Dorsolateral prefrontal cortex (tissue), 120 donors: ENCODE measurements at regions of chr19 and their contacts with region 1.

Region 1: GRCh38 chr19:7152568-7152967 is 83.1 kb downstream of the ZNF557 start:
- DNase-seq: no peak
- H3K4me3 ChIP-seq: no peak overlapping the region
- H3K27ac ChIP-seq: no peak overlapping the region
- H3K27me3 ChIP-seq: no peaks in the 10 kb centered on the region
- CTCF ChIP-seq: no peak

Region 2: GRCh38 chr19:7197760-7198696 is 45.5 kb after region 1 on chr19:
- intact Hi-C with region 1: loop called in 1 of 2 experiments (anchors 5 kb)
- DNase-seq: peak; percentile 78 to 94 (median 90)
- H3K4me3 ChIP-seq: peak overlapping the region; percentile 48 to 100 (median 87)
- H3K27ac ChIP-seq: peak overlapping the region in 58 of 59 donors; percentile 20 to 94 (median 87)
- H3K27me3 ChIP-seq: no peaks in the 10 kb centered on the region
- CTCF ChIP-seq: peak in 32 of 56 donors; percentile 9 to 47 (median 31)